ENCODE measurements at regions of chr1 and their contacts with region 1.

Region 1: GRCh38 chr1:3910857-3911845 is 11.1 kb upstream of the C1orf174 start:
- DNase-seq: peak; percentile 92
- ATAC-seq: peak; percentile 97
- H3K4me3 ChIP-seq: peak overlapping the region; percentile 48
- H3K27ac ChIP-seq: no peak overlapping the region
- H3K4me1 ChIP-seq: peaks cover 4% of the 10 kb centered on the region; the same call in 1 of the 2 replicates
- H3K27me3 ChIP-seq: peaks cover 19% of the 10 kb centered on the region; the same call in 1 of the 2 replicates
- CTCF ChIP-seq: peak; percentile 97

Region 2: GRCh38 chr1:3883194-3883925 is 27.8 kb before region 1 on chr1:
- CTCF ChIA-PET with region 1: no interaction called
- POLR2A ChIA-PET with region 1: no interaction called
- intact Hi-C with region 1: no loop called
- DNase-seq: no peak
- ATAC-seq: no peak
- H3K4me3 ChIP-seq: no peak overlapping the region
- H3K27ac ChIP-seq: no peak overlapping the region
- H3K4me1 ChIP-seq: no peaks in the 10 kb centered on the region
- H3K27me3 ChIP-seq: no peaks in the 10 kb centered on the region
- CTCF ChIP-seq: no peak

Region 3: DNA sequence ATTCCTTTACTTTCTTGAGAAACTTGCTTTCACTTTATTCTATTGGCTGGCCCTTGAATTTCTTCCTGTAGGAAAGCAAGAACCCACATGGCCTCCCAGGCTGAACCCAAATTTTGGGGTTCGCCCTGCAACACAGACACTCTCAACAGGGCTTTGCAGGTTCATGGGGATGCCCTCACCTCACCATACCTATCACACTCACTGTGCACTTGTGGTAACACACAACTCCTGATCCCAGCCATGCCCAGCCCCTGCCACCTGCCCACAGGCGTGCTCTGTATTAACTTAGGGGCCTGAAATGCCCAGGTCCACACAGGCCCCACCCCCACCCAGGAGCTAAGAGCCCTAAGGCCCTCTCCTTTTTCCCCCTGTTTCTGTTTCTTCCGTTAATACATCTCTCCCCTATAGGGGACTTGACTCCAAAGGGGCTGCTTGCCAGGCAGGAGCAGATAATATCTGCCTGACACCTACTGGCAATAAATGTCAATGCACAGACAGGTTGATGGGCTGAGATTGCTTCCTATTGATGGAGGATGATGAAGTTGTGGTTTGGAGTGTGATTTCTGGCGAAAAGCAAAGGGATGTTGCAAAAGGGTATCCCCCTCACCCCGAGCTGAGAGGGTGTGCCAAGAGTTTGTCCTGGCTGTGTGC is 914.8 kb after region 1 on chr1:
- CTCF ChIA-PET with region 1: no interaction called
- POLR2A ChIA-PET with region 1: no interaction called
- intact Hi-C with region 1: loop called (anchors 5 kb)
- DNase-seq: peak; percentile 41
- ATAC-seq: 0 out of 2 replicates have a peak, but pooled peaks have one; percentile 38
- H3K4me3 ChIP-seq: no peak overlapping the region
- H3K27ac ChIP-seq: no peak overlapping the region
- H3K4me1 ChIP-seq: no peaks in the 10 kb centered on the region
- H3K27me3 ChIP-seq: no peaks in the 10 kb centered on the region
- CTCF ChIP-seq: peak; percentile 54

Region 4: GRCh38 chr1:5514519-5515183 is 1603.5 kb after region 1 on chr1:
- CTCF ChIA-PET with region 1: no interaction called
- POLR2A ChIA-PET with region 1: no interaction called
- intact Hi-C with region 1: loop called (anchors 5 kb)
- DNase-seq: peak; percentile 73
- ATAC-seq: peak; percentile 89
- H3K4me3 ChIP-seq: no peak overlapping the region
- H3K27ac ChIP-seq: no peak overlapping the region
- H3K4me1 ChIP-seq: no peaks in the 10 kb centered on the region
- H3K27me3 ChIP-seq: peaks cover 44% of the 10 kb centered on the region
- CTCF ChIP-seq: peak; percentile 100

Region 5: DNA sequence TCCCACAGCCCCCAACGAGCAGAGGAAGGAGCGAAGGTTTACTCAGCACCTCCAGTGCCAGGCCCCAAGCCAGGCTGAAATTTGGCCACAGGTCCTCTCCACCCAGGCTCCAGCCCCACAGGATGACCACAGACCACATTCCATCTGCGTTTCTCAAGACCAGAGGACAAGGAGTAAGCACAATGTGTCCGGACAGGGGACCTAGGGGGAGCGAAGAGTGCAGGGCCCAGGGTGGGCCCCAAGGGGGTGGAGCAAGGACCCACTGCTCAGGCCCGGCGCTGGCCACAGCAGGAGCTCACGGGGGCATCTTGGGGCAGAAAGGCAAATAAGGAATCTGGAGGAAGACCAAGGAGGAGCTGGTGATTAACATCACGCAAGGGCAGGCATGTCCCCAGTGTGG is 1980.6 kb after region 1 on chr1:
- CTCF ChIA-PET with region 1: no interaction called
- POLR2A ChIA-PET with region 1: no interaction called
- intact Hi-C with region 1: loop called (anchors 5 kb)
- DNase-seq: no peak
- ATAC-seq: no peak
- H3K4me3 ChIP-seq: no peak overlapping the region
- H3K27ac ChIP-seq: no peak overlapping the region
- H3K4me1 ChIP-seq: no peaks in the 10 kb centered on the region
- H3K27me3 ChIP-seq: no peaks in the 10 kb centered on the region
- CTCF ChIP-seq: no peak

Measured in PC-3 (cell line).